ENCODE measurements at regions of chr6 and their contacts with region 1.

Region 1: DNA sequence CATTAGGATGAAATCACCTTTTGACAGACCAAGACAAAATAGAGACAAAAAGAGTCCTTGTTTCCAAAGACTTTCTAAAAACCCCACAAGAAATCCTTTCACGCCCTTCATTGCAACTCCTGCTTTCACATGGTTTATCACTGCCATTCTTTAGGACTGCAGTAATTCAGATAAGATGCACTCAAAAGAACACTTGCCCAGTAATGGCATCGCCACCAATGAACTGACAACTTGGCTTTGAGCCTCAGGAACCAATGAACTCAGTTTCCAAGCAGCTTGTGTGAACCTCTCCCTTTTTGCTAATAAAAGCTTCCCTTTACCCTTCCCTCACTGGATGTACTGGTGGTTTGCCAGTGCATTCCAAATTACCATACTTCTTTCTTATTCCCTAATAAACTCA is 21.8 kb downstream of the OSTM1 start:
- DNase-seq: no peak
- ATAC-seq: no peak
- H3K4me3 ChIP-seq: no peak overlapping the region
- H3K4me3 Mint-ChIP-seq: no peak overlapping the region
- H3K27ac ChIP-seq: no peak overlapping the region
- H3K27ac Mint-ChIP-seq: no peak overlapping the region
- H3K4me1 ChIP-seq: no peaks in the 10 kb centered on the region
- H3K4me1 Mint-ChIP-seq: peaks cover 6 to 7% of the 10 kb centered on the region in 2 donors
- H3K27me3 ChIP-seq: no peaks in the 10 kb centered on the region
- H3K27me3 Mint-ChIP-seq: no peaks in the 10 kb centered on the region
- CTCF ChIP-seq: no peak

Region 2: DNA sequence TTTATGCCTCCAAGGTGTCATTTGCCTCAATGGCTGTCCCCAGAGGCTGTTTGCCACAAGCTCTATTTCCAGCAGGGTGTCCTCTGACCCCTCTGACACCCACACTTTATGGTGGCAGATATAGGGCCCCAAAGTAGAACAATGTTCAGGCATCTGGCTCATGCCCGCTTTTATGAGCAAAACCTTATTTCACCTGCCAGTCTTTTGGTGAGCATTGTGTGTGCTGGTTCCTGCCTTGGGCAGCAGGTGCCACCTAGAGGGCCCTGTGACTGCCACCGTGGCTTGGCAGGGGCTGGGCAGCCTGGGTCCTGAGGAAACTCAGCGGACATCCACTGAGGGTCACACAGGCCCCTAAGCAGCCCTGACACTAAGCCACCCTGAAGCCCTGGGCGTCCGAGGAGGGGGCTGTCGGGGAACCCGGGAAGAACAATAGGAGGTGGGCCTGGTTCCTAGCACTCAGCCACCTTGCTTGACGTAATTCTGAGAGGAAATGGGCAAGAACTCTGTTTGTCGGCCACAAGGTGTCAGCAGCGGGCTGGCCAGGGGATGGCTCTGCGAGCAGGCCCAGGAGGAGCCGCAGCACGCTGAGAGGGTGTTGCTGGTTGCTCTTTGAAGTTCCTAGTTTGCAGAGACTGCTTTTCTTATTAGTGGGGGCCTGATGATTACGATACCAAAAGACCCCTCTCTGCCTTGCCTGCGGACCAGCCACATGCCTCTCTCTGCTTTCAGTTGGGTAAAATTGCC is 377.5 kb before region 1 on chr6:
- intact Hi-C with region 1: loop called (anchors 1 kb)
- DNase-seq: peak; percentile 81 to 94
- ATAC-seq: peak; percentile 92 to 99 (median 99)
- H3K4me3 ChIP-seq: no peak overlapping the region
- H3K4me3 Mint-ChIP-seq: no peak overlapping the region
- H3K27ac ChIP-seq: peak overlapping the region; percentile 20
- H3K27ac Mint-ChIP-seq: peak overlapping the region in 1 of 2 donors; percentile 78
- H3K4me1 ChIP-seq: peaks cover 21% of the 10 kb centered on the region
- H3K4me1 Mint-ChIP-seq: peaks cover 8 to 11% of the 10 kb centered on the region in 2 donors
- H3K27me3 ChIP-seq: no peaks in the 10 kb centered on the region
- H3K27me3 Mint-ChIP-seq: peaks cover 0 to 6% of the 10 kb centered on the region in 2 donors
- CTCF ChIP-seq: peak; percentile 90

Region 3: DNA sequence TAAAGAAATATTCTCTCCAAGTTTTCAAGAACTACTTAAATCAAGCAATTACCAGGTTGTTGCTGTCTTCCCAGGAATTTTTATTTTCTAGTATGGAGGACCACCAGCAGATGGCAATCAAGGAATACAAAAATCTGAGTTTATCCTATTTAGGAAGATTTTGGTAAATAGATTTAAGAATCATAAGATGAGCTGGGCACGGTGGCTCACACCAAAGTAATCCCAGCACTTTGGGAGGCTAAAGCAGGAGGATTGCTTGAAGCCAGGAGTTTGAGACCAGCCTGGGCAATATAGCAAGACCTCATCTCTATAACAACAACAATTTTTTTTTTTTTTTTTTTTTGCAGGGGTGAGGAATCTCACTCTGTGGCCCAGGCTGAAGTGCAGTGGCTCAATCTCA is 75.4 kb before region 1 on chr6:
- intact Hi-C with region 1: loop called (anchors 5 kb)
- DNase-seq: peak in 1 of 2 donors; percentile 24
- ATAC-seq: no peak
- H3K4me3 ChIP-seq: no peak overlapping the region
- H3K4me3 Mint-ChIP-seq: no peak overlapping the region
- H3K27ac ChIP-seq: no peak overlapping the region
- H3K27ac Mint-ChIP-seq: no peak overlapping the region
- H3K4me1 ChIP-seq: peaks cover 6% of the 10 kb centered on the region
- H3K4me1 Mint-ChIP-seq: peaks cover 16% of the 10 kb centered on the region in 2 donors
- H3K27me3 ChIP-seq: no peaks in the 10 kb centered on the region
- H3K27me3 Mint-ChIP-seq: peaks cover 0 to 5% of the 10 kb centered on the region in 2 donors
- CTCF ChIP-seq: no peak

Measured in natural killer cell (primary cell).